Heart left ventricle (tissue), 16 donors: ENCODE measurements at regions of chr1 and their contacts with region 1.

Region 1: DNA sequence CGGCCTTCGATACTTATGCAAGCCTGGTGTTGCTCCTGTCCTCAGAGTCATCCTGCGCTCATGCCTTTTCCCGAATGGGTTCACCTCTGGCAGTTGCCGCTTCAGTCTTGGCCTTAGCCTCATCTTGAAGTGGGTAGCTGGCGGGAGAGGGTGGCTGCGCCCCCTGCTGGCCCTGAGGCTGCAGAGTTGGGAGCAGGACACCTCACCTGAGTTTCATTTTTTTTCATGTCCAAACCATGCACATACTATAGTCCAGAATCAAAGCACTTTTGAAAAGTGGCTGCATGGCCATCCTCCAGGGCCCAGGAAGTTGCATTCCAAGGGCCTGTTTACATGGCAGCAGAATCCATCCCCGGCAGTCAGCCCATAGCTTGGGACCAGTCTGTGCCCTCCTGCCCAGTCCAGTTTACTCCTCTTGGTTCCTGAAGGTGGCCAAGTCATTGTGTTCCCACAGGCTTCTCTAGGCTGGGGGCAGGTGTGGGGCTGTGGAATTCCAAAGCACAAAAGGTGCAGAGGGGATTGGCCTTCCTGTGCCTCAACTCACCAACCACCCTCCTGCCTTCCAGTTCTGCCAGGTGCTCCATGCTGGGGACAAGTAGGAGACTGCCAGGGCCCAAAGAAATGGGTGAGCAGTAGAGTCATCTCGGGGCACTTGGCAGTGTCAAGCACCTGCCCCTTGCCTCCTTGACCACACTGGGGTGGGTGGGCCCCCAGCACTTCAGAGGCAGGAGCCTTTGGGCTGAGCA is 44.0 kb downstream of the YARS1 start:
- DNase-seq: peak; percentile 75 to 89 (median 80)
- ATAC-seq: peak; percentile 78 to 91 (median 83)
- H3K4me3 ChIP-seq: no peak overlapping the region
- H3K27ac ChIP-seq: no peak overlapping the region
- H3K4me1 ChIP-seq: peaks cover 0 to 9% (median 6%) of the 10 kb centered on the region in 12 donors
- H3K27me3 ChIP-seq: no peaks in the 10 kb centered on the region
- CTCF ChIP-seq: peak; percentile 87 to 95 (median 92)
- POLR2A ChIP-seq: no peak

Region 2: GRCh38 chr1:32400876-32401631 is 372.1 kb before region 1 on chr1:
- intact Hi-C with region 1: loop called in 8 of 10 experiments (anchors 2 to 10 kb)
- DNase-seq: peak; percentile 82 to 92 (median 88)
- ATAC-seq: peak; percentile 93 to 99 (median 98)
- H3K4me3 ChIP-seq: no peak overlapping the region
- H3K27ac ChIP-seq: peak overlapping the region in 10 of 12 donors; percentile 2 to 67 (median 42)
- H3K4me1 ChIP-seq: peaks cover 0 to 12% (median 0%) of the 10 kb centered on the region in 12 donors
- H3K27me3 ChIP-seq: no peaks in the 10 kb centered on the region
- CTCF ChIP-seq: peak; percentile 82 to 96 (median 88)
- POLR2A ChIP-seq: peak in 1 of 2 donors; percentile 12

Region 3: GRCh38 chr1:32448773-32449456 is 324.3 kb before region 1 on chr1:
- intact Hi-C with region 1: loop called in 2 of 10 experiments (anchors 5 kb)
- DNase-seq: no peak
- ATAC-seq: no peak
- H3K4me3 ChIP-seq: no peak overlapping the region
- H3K27ac ChIP-seq: no peak overlapping the region
- H3K4me1 ChIP-seq: peaks cover 0 to 3% (median 0%) of the 10 kb centered on the region in 12 donors
- H3K27me3 ChIP-seq: peaks cover 0 to 8% (median 0%) of the 10 kb centered on the region in 9 donors
- CTCF ChIP-seq: peak in 4 of 12 donors; percentile 7 to 20 (median 12)
- POLR2A ChIP-seq: no peak

Region 4: GRCh38 chr1:32454726-32455125 is 318.5 kb before region 1 on chr1:
- intact Hi-C with region 1: loop called in 2 of 10 experiments (anchors 5 kb)
- DNase-seq: peak in 1 of 5 donors; percentile 41
- ATAC-seq: peak in 3 of 4 donors; percentile 26 to 53 (median 48)
- H3K4me3 ChIP-seq: no peak overlapping the region
- H3K27ac ChIP-seq: no peak overlapping the region
- H3K4me1 ChIP-seq: peaks cover 0 to 4% (median 0%) of the 10 kb centered on the region in 12 donors
- H3K27me3 ChIP-seq: peaks cover 0 to 3% (median 0%) of the 10 kb centered on the region in 9 donors
- CTCF ChIP-seq: no peak
- POLR2A ChIP-seq: no peak

Region 5: DNA sequence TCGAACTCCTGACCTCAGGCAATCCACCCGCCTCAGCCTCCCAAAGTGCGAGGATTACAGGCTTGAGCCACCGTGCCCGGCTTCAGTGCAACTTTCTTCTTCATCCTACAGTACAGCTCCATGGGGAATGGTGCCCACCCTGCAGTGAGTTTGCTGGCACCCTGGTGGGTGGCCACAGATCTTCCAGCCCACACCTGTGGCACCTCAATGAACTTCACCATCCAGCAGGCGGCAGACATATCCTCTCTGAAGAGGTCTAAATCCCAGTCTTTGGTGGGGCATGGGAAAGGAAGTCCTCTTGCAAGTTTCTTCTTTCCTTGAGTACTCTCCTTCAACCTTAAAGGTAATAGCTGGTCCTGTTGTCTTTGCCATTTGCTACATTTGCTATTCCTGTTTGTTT is 252.0 kb before region 1 on chr1:
- intact Hi-C with region 1: loop called in 6 of 10 experiments (anchors 2 to 10 kb)
- DNase-seq: no peak
- ATAC-seq: no peak
- H3K4me3 ChIP-seq: peak overlapping the region in 2 of 12 donors; percentile 41 to 50
- H3K27ac ChIP-seq: no peak overlapping the region
- H3K4me1 ChIP-seq: peaks cover 0 to 4% (median 0%) of the 10 kb centered on the region in 12 donors
- H3K27me3 ChIP-seq: no peaks in the 10 kb centered on the region
- CTCF ChIP-seq: no peak
- POLR2A ChIP-seq: no peak

Region 6: DNA sequence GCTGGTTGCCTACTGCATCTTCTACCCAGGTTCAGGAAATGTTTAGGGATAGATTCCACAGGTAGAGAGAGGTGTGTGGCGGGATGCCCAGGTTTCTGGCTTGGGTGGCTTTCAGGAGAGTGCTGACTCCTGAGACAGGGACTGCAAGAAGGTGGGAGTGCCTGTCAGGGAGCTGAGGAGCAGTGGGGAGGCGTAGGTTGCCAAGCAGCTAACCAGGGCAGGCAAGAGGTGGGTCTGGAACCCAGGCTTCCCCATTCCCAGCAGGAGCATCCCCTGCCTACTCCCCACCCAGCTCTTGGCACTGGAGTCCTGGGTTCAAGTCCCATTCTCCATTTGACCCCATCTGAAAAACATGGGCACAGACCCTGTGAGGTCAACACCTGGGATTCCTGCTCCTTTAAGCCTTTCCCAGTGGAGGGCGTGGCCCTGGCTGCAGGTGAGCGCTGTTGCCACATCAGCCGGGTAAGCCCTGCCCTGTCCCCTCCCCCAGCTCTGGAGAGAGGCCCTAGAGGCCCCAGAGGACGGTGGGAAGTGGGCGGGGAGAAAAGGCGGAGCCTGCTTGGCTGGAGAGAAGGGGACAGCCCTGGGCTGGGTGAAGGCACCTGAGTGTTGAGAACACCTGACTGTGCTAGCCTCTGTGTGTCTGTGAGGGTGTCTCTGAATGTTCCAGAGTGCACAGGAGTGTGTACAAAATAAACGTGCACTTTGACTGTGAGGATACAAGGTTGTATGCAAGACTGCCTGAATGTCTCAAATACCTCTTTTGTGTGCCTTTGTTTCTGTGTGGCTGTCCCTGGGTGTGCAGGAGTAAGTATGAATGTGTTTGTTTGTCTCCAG is 56.7 kb before region 1 on chr1:
- intact Hi-C with region 1: loop called (anchors 1 to 5 kb)
- DNase-seq: peak in 4 of 5 donors; percentile 48 to 70 (median 61)
- ATAC-seq: peak; percentile 61 to 72 (median 68)
- H3K4me3 ChIP-seq: no peak overlapping the region
- H3K27ac ChIP-seq: no peak overlapping the region
- H3K4me1 ChIP-seq: peaks cover 0 to 10% (median 3%) of the 10 kb centered on the region in 12 donors
- H3K27me3 ChIP-seq: peaks cover 0 to 3% (median 0%) of the 10 kb centered on the region in 9 donors
- CTCF ChIP-seq: no peak
- POLR2A ChIP-seq: peak in 1 of 2 donors; percentile 16

Region 7: GRCh38 chr1:32741413-32742198 is 31.6 kb before region 1 on chr1:
- intact Hi-C with region 1: loop called in 1 of 10 experiments (anchors 1 kb)
- DNase-seq: peak in 2 of 5 donors; percentile 30 to 40
- ATAC-seq: peak in 3 of 4 donors; percentile 31 to 74 (median 67)
- H3K4me3 ChIP-seq: peak overlapping the region; percentile 57 to 86 (median 76)
- H3K27ac ChIP-seq: peak overlapping the region; percentile 7 to 87 (median 70)
- H3K4me1 ChIP-seq: peaks cover 0 to 29% (median 20%) of the 10 kb centered on the region in 12 donors
- H3K27me3 ChIP-seq: no peaks in the 10 kb centered on the region
- CTCF ChIP-seq: peak in 10 of 12 donors; percentile 10 to 59 (median 42)
- POLR2A ChIP-seq: no peak